ENCODE measurements at regions of chr9 and their contacts with region 1.

Region 1: GRCh38 chr9:128406848-128407391 is 13.7 kb upstream of the CERCAM start:
- DNase-seq: no peak
- H3K4me3 ChIP-seq: no peak overlapping the region
- H3K27ac ChIP-seq: no peak overlapping the region
- H3K4me1 ChIP-seq: no peaks in the 10 kb centered on the region
- H3K27me3 ChIP-seq: no peaks in the 10 kb centered on the region
- CTCF ChIP-seq: no peak

Region 2: DNA sequence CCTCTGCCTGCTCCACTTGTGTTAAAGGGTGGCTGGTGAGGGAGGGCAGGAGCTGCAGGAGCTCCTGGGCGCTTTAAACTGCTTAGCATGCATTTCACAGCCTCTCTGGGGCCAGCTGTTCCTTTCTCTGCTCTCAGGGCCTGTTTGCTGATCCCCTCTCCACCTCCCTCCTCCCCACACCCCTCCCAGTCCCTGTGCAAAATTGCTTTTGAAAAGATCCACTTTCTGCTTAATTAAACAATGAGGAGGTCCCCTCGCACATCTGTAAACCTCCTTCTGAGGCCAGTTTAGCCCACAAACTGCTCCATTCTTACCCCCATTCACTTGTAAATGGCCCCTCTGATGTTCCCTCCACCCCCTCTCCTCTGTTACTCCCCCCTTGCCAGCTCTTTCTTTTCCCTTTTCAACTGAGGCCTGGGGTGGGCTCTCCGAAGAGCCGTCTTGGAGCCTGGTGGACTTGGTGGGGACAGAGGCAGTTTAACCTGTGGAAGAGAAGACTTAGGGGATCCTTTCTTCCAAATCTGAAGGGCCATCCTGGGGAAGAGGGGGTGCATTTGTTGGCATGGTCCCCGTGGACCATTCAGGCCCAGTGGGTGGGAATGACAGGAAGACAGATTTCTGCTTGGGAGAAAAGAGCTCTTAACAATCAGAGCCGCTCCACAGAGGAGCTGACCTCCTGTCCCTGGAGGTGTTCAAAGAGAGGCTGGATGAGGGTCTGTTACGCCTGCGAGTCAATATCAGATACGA is 23.7 kb before region 1 on chr9:
- CTCF ChIA-PET with region 1: no interaction called
- POLR2A ChIA-PET with region 1: interaction called, 10 read pairs
- intact Hi-C with region 1: no loop called
- DNase-seq: peak; percentile 57
- H3K4me3 ChIP-seq: no peak overlapping the region
- H3K27ac ChIP-seq: peak overlapping the region; percentile 24
- H3K4me1 ChIP-seq: peaks cover 21% of the 10 kb centered on the region
- H3K27me3 ChIP-seq: no peaks in the 10 kb centered on the region
- CTCF ChIP-seq: no peak

Region 3: GRCh38 chr9:129084087-129084486 is 677.2 kb after region 1 on chr9:
- CTCF ChIA-PET with region 1: no interaction called
- POLR2A ChIA-PET with region 1: no interaction called
- intact Hi-C with region 1: no loop called
- DNase-seq: no peak
- H3K4me3 ChIP-seq: no peak overlapping the region
- H3K27ac ChIP-seq: no peak overlapping the region
- H3K4me1 ChIP-seq: peaks cover 15% of the 10 kb centered on the region
- H3K27me3 ChIP-seq: no peaks in the 10 kb centered on the region
- CTCF ChIP-seq: no peak